AG04449 (cell line): ENCODE measurements at regions of chr3 and their contacts with region 1.

Region 1: DNA sequence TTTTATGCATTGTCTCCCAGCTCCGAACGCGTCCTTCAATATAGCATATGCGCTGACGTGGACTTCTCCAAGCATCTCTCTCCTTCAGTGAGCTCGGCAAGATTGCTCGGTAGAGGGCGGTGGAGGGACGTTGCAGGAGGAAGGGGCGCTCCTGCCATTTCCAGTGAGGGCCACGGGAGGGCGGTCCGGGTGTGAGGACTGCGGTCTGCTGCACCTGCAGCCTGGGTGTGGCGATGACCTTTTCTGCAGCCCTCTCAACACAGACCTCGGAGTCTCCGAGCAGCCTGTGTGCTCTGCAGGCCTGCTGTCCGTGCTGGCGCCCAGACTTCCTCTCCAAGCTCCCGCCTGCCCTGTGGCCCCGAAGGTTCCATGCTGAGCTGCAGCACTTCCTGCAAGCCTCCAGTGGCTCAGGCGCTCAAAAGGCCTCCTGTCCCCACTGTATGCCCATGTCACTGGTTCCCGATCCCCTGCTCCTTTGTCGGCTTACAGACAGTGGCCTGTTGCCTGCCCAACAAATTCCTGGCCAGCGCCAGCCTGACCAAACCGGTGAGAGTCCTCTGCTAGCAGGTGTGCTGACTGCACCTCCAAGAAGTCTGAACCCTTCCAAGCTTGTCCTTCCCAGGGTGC is 8.9 kb upstream of the RTP3 start:
- DNase-seq: no peak
- H3K4me3 ChIP-seq: no peak overlapping the region
- CTCF ChIP-seq: peak; percentile 100

Region 2: GRCh38 chr3:45817831-45818522 is 670.9 kb before region 1 on chr3:
- CTCF ChIA-PET with region 1: no interaction called
- POLR2A ChIA-PET with region 1: no interaction called
- DNase-seq: peak; percentile 90
- H3K4me3 ChIP-seq: no peak overlapping the region
- CTCF ChIP-seq: no peak

Region 3: DNA sequence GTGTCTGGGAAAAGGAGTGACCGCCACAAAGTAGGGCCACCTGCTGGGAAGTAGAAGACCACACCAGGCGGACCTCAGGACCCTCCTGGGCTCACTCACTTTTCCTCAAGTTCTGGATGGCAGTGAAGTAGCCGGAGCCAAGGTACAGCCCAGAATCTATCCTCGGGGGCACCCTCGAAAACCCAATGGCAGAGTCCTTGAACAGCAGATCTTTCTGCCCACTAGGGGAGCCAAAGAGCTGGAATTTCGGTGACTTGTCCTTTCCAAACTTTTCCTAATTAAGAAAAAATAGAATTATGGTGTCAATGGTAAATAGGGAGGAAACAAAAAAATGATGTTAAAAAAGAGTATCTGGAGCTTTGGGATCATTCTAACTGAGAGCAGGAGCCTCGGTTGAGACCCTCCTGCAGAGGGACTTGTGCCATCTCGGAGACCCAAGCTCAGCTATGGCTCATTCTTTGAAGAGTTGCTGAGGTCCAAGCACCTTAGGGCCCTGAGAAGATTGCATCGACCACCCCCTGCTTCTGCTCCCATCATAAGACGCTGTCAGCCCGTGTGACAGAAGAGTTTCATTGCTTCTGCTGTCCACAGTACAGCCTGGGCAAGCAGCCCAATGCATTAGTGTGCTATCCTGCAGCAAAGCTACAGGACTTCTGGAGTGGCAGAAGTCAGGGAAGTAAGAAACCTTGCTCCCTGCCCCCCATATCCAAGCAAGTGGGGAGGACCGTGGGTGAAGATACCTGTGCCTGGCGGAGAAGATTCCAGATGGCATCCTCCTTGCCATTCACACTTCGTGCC is 38.9 kb before region 1 on chr3:
- CTCF ChIA-PET with region 1: interaction called, 11 read pairs
- POLR2A ChIA-PET with region 1: no interaction called
- DNase-seq: no peak
- H3K4me3 ChIP-seq: no peak overlapping the region
- CTCF ChIP-seq: peak; percentile 47

Region 4: GRCh38 chr3:46508850-46509591 is 20.2 kb after region 1 on chr3:
- CTCF ChIA-PET with region 1: interaction called, 12 read pairs
- POLR2A ChIA-PET with region 1: no interaction called
- DNase-seq: no peak
- H3K4me3 ChIP-seq: no peak overlapping the region
- CTCF ChIP-seq: no peak

Region 5: GRCh38 chr3:46538803-46539442 is 50.1 kb after region 1 on chr3:
- CTCF ChIA-PET with region 1: interaction called, 28 read pairs
- POLR2A ChIA-PET with region 1: no interaction called
- DNase-seq: no peak
- H3K4me3 ChIP-seq: peak overlapping the region; percentile 23
- CTCF ChIP-seq: no peak

Region 6: DNA sequence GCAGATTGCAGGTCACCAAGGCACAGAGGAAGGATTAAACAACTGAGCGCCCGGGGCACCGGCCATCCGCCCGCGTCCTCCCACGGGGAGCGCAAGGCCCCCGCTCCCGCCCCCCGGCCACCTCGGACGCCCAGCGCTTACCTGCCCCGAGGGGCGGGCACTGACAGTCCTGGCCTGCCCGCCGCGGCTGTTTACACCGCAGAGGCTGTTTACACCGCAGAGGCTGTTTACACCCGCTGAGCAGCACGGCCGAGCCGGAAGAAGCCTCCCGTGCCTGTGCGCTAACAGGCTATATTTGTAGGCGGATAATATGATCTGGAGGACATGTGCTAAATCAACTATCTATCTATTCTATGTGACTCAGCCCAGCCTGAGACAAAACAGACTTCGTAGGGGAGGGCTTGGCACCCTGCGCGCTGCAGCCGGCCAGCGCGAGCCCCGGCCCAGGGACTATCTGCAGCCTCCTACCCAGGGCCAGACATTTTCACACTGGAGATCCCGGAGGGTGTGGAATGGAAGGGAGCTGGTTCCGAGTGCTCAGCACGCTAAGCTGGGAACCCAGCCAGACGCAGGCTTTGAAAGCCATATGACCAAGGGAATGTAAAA is 77.3 kb after region 1 on chr3 and contains the start of gene LRRC2:
- CTCF ChIA-PET with region 1: interaction called, 112 read pairs
- POLR2A ChIA-PET with region 1: no interaction called
- DNase-seq: no peak
- H3K4me3 ChIP-seq: peak within 1 kb of the TSS; percentile 62
- CTCF ChIP-seq: no peak

Region 7: GRCh38 chr3:46629551-46630517 is 141.0 kb after region 1 on chr3:
- CTCF ChIA-PET with region 1: interaction called, 418 read pairs
- POLR2A ChIA-PET with region 1: interaction called, 5 read pairs
- DNase-seq: no peak
- H3K4me3 ChIP-seq: peak overlapping the region; percentile 41
- CTCF ChIP-seq: peak; percentile 100

Region 8: DNA sequence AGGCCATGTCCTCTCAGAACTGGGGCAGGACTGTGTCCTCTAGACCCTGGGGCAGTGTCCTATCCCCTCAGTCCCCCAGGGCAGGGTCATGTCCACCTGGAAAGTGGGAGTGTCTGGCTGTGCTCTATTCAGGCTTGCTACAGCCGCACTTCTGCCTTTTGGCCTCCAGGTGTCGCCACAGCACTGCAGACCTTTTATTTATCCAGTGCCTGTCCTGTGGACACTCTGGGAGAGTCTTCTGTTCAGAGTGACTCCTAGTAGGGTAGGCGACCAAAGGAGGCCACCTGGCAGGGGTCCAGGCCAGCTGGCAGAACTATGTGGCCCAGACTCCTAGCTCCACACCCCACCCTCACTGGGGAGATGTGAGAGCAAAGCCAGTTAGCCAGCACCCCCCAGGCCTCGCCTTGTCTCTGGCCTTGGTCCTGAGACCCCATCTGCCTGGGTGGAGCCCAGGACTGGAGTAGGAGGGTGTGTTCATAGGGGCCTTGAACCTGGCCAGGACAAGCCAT is 216.2 kb after region 1 on chr3:
- CTCF ChIA-PET with region 1: interaction called, 10 read pairs
- POLR2A ChIA-PET with region 1: no interaction called
- DNase-seq: no peak
- H3K4me3 ChIP-seq: no peak overlapping the region
- CTCF ChIP-seq: peak; percentile 93